Mammary epithelial cell (primary cell): ENCODE measurements at regions of chr15 and their contacts with region 1.

Region 1: GRCh38 chr15:40847205-40847961 is 3.5 kb downstream of the SPINT1 start:
- DNase-seq: peak; percentile 65
- H3K4me3 ChIP-seq: peak overlapping the region in 2 of 3 experiments; percentile 5 to 94
- H3K27ac ChIP-seq: peak overlapping the region; percentile 85
- H3K4me1 ChIP-seq: peaks cover 34% of the 10 kb centered on the region
- H3K27me3 ChIP-seq: no peaks in the 10 kb centered on the region
- CTCF ChIP-seq: no peak

Region 2: GRCh38 chr15:40743921-40744814 is 103.2 kb before region 1 on chr15:
- CTCF ChIA-PET with region 1: no interaction called
- dilution Hi-C with region 1: no loop called
- in situ Hi-C with region 1: no loop called
- intact Hi-C with region 1: loop called (anchors 2 kb)
- DNase-seq: peak; percentile 78
- H3K4me3 ChIP-seq: no peak overlapping the region
- H3K27ac ChIP-seq: no peak overlapping the region
- H3K4me1 ChIP-seq: peaks cover 10% of the 10 kb centered on the region
- H3K27me3 ChIP-seq: no peaks in the 10 kb centered on the region
- CTCF ChIP-seq: no peak

Region 3: GRCh38 chr15:40763801-40764732 is 83.3 kb before region 1 on chr15 and contains the start of gene GCHFR:
- CTCF ChIA-PET with region 1: no interaction called
- dilution Hi-C with region 1: no loop called
- in situ Hi-C with region 1: no loop called
- intact Hi-C with region 1: no loop called
- DNase-seq: peak; percentile 36
- H3K4me3 ChIP-seq: peak within 1 kb of the TSS in 2 of 3 experiments; percentile 27 to 46
- H3K27ac ChIP-seq: no peak within 1 kb of the TSS
- H3K4me1 ChIP-seq: peaks cover 40% of the 10 kb centered on the region
- H3K27me3 ChIP-seq: no peaks in the 10 kb centered on the region
- CTCF ChIP-seq: peak in 1 of 2 donors; percentile 34
- total RNA-seq, gene GCHFR: 1.0 to 1.2 TPM

Region 4: GRCh38 chr15:40793216-40793989 is 54.0 kb before region 1 on chr15:
- CTCF ChIA-PET with region 1: no interaction called
- dilution Hi-C with region 1: no loop called
- in situ Hi-C with region 1: loop called in 1 of 2 experiments (anchors 5 kb)
- intact Hi-C with region 1: no loop called
- DNase-seq: peak; percentile 96
- H3K4me3 ChIP-seq: no peak overlapping the region
- H3K27ac ChIP-seq: peak overlapping the region; percentile 44
- H3K4me1 ChIP-seq: peaks cover 17% of the 10 kb centered on the region
- H3K27me3 ChIP-seq: no peaks in the 10 kb centered on the region
- CTCF ChIP-seq: no peak

Region 5: DNA sequence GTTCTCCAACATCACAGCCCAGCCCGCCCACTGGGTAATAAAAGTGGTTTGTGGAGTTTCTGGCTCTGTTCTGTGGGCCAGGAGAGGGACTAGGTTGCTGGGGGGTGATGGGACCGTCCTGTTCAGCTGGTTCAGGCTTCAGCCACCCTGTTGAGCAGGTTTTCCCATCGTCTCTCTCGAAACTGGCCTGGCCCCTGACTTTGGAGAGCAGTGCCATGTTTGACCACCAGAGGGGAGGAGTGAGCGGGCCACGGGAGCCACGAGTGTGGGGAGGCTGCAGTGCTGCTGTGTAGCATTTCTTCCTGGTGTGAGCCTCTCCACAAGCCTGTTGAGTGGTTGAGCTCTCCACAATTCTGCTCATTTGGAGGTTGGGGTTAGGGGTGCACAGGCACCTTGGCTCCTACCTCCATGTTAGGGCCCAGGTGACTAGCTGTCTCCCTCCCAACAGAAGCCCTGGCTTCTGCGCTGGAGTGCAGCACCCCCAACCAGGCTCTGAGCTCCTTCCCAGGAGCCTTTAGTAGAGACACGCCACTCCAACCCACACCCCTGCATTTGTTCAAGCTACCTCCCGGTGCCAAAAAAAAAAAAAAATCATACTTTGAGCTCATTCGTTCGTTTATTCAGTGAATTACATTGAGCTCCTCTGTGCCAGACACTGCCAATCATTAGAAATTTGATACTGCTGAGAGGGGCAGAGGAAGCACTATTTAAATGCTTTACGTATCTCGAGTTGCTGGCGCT is 10.4 kb after region 1 on chr15:
- CTCF ChIA-PET with region 1: interaction called, 21 read pairs
- dilution Hi-C with region 1: no loop called
- in situ Hi-C with region 1: no loop called
- intact Hi-C with region 1: no loop called
- DNase-seq: peak; percentile 79
- H3K4me3 ChIP-seq: no peak overlapping the region
- H3K27ac ChIP-seq: peak overlapping the region; percentile 40
- H3K4me1 ChIP-seq: no peaks in the 10 kb centered on the region
- H3K27me3 ChIP-seq: no peaks in the 10 kb centered on the region
- CTCF ChIP-seq: peak; percentile 98 to 99

Region 6: DNA sequence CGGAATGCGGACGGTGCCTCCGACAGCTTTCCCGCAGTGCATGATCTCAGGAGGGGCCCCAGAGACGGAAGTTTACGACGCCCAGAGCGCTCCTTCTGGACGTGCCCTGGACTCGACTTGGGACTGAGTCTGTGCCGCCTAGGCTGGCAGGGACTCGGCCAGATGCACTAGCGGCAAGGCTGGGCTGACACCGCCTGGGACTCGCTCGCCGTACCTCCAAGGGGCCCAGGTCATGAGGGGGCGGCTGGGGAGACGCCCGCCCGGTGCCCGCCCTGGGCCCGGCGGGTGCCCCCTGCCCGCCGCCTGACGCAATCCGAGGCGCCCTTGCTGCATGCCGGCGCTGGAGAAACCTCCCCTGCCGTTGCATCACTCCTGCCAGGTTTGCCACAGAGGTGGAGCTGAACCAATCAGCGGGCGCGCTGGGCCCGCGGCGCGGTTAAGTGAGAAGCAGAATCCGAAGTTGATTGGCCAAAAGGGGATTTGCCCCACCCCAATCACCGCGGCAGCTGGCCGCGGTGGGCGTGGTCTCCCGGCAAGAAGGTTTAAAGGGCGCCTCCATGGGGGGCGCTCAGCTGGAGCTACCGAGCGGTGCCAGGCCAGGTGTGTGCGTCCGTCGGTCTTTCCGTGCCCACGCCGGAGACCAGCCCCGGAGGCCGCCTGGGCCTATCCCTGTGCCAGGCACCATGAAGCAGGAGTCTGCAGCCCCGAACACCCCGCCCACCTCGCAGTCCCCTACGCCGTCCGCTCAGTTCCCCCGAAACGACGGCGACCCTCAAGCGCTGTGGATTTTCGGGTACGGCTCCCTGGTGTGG is 105.7 kb after region 1 on chr15 and contains the start of gene CHAC1:
- CTCF ChIA-PET with region 1: no interaction called
- dilution Hi-C with region 1: no loop called
- in situ Hi-C with region 1: no loop called
- intact Hi-C with region 1: no loop called
- DNase-seq: peak; percentile 95
- H3K4me3 ChIP-seq: peak within 1 kb of the TSS; percentile 81 to 93 (median 87)
- H3K27ac ChIP-seq: peak within 1 kb of the TSS; percentile 85
- H3K4me1 ChIP-seq: peaks cover 14% of the 10 kb centered on the region
- H3K27me3 ChIP-seq: no peaks in the 10 kb centered on the region
- CTCF ChIP-seq: peak in 1 of 2 donors; percentile 6
- total RNA-seq, gene CHAC1: 72.4 to 127 TPM

Region 7: GRCh38 chr15:42080585-42081462 is 1233.4 kb after region 1 on chr15:
- CTCF ChIA-PET with region 1: no interaction called
- dilution Hi-C with region 1: no loop called
- in situ Hi-C with region 1: no loop called
- intact Hi-C with region 1: no loop called
- DNase-seq: no peak
- H3K4me3 ChIP-seq: no peak overlapping the region
- H3K27ac ChIP-seq: no peak overlapping the region
- H3K4me1 ChIP-seq: peaks cover 24% of the 10 kb centered on the region
- H3K27me3 ChIP-seq: no peaks in the 10 kb centered on the region
- CTCF ChIP-seq: no peak